Transverse colon (tissue), 4 donors: ENCODE measurements at regions of chr6 and their contacts with region 1.

Region 1: DNA sequence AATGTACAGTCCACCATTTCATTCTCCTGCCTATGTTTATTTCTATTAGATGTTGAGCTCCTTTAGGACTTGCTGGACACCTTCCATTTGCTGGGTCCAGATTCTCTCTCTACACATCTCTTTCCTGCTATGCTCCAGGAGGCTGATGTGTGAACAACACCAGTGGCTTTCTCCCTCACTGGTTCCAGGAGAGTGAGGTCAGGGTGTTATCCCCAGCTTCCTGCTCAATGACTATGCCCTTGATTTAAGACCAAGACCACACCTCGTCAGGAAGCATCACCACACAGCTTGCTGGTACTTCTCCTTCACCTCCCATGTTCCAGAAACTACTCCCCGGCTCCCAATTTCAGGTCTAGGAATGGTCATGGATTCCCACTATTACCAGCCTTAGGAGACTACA is 31.3 kb upstream of the E2F3 start:
- DNase-seq: no peak
- H3K4me3 ChIP-seq: no peak overlapping the region
- H3K27ac ChIP-seq: no peak overlapping the region
- H3K4me1 ChIP-seq: peaks cover 0 to 8% (median 0%) of the 10 kb centered on the region in 4 donors
- H3K27me3 ChIP-seq: no peaks in the 10 kb centered on the region
- CTCF ChIP-seq: no peak
- EP300 ChIP-seq: no peak
- POLR2A ChIP-seq: no peak

Region 2: GRCh38 chr6:20409427-20409971 is 39.1 kb after region 1 on chr6:
- in situ Hi-C with region 1: no loop called
- intact Hi-C with region 1: loop called (anchors 1 kb)
- DNase-seq: peak; percentile 27
- H3K4me3 ChIP-seq: no peak overlapping the region
- H3K27ac ChIP-seq: peak overlapping the region in 2 of 4 donors; percentile 1 to 52
- H3K4me1 ChIP-seq: peaks cover 0 to 8% (median 0%) of the 10 kb centered on the region in 4 donors
- H3K27me3 ChIP-seq: no peaks in the 10 kb centered on the region
- CTCF ChIP-seq: no peak
- EP300 ChIP-seq: no peak
- POLR2A ChIP-seq: no peak

Region 3: GRCh38 chr6:20919677-20920385 is 549.4 kb after region 1 on chr6:
- in situ Hi-C with region 1: no loop called
- intact Hi-C with region 1: no loop called
- DNase-seq: no peak
- H3K4me3 ChIP-seq: no peak overlapping the region
- H3K27ac ChIP-seq: no peak overlapping the region
- H3K4me1 ChIP-seq: peaks cover 0 to 10% (median 3%) of the 10 kb centered on the region in 4 donors
- H3K27me3 ChIP-seq: no peaks in the 10 kb centered on the region
- CTCF ChIP-seq: no peak
- EP300 ChIP-seq: no peak
- POLR2A ChIP-seq: no peak